ENCODE measurements at regions of chr2 and their contacts with region 1.

Region 1: DNA sequence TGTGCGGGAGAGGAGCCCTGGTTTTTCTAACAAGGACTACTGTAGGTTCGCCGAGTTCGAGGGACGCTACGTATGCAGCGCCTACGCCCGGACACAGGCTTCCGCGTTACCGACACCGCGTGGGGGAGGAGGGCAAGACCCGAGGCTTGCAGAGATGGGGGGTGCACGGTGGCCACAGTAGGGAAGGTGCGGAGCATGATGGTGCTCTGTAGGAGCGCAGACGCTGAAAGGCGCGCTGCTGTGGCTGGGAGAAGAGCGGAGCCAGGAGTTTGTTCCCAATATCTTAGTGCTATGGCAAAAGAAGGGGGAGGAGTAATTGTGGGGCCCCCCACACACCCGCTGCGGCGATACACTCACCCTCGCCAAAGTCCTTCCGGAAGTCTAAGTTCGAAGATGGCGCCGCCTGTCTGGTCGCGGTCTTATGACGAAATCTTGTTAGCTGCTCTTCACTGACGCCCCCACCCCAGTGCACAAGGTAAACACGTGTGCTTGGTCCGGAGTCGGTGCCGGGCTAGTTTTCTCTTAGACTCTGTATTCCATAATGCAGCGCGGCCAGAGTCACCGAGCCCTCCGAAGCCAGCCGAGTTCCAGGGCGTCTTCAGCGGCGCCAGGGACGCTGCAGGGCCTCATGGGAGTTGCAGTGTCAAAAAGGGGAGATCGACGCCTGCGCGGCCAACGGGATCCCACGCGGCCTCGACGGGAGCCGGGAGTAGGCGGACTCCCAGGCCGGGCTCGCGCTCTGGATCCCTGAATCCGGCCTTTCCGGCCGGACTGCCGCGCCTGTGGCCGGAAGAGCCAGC is at the start of gene GTF3C2:
- DNase-seq: peak; percentile 95 to 98
- ATAC-seq: peak; percentile 93 to 96 (median 94)
- H3K4me3 ChIP-seq: peak within 1 kb of the TSS; percentile 95
- H3K27ac ChIP-seq: peak within 1 kb of the TSS; percentile 98
- H3K4me1 ChIP-seq: peaks cover 48% of the 10 kb centered on the region
- H3K27me3 ChIP-seq: no peaks in the 10 kb centered on the region
- CTCF ChIP-seq: no peak
- total RNA-seq, gene GTF3C2: 17.5 to 44.9 (median 31.1) TPM

Region 2: GRCh38 chr2:27322766-27323595 is 33.6 kb before region 1 on chr2 and contains the start of gene MPV17:
- intact Hi-C with region 1: loop called (anchors 5 kb)
- DNase-seq: peak; percentile 92 to 97
- ATAC-seq: peak; percentile 79 to 83 (median 80)
- H3K4me3 ChIP-seq: peak within 1 kb of the TSS; percentile 84
- H3K27ac ChIP-seq: peak within 1 kb of the TSS; percentile 99
- H3K4me1 ChIP-seq: peaks cover 46% of the 10 kb centered on the region
- H3K27me3 ChIP-seq: no peaks in the 10 kb centered on the region
- CTCF ChIP-seq: no peak
- total RNA-seq, gene MPV17: 11.9 to 20.9 (median 14.9) TPM

Region 3: GRCh38 chr2:27446057-27446456 is 89.5 kb after region 1 on chr2:
- intact Hi-C with region 1: no loop called
- DNase-seq: no peak
- ATAC-seq: no peak
- H3K4me3 ChIP-seq: no peak overlapping the region
- H3K27ac ChIP-seq: no peak overlapping the region
- H3K4me1 ChIP-seq: peaks cover 15% of the 10 kb centered on the region
- H3K27me3 ChIP-seq: no peaks in the 10 kb centered on the region
- CTCF ChIP-seq: no peak

Measured in psoas muscle (tissue), 8 donors.